Transverse colon (tissue), 4 donors: ENCODE measurements at regions of chr3 and their contacts with region 1.

Region 1: GRCh38 chr3:45760878-45761711 is 35.2 kb downstream of the SLC6A20 start:
- DNase-seq: peak; percentile 58
- H3K4me3 ChIP-seq: no peak overlapping the region
- H3K27ac ChIP-seq: no peak overlapping the region
- H3K4me1 ChIP-seq: peaks cover 0 to 3% (median 0%) of the 10 kb centered on the region in 4 donors
- H3K27me3 ChIP-seq: no peaks in the 10 kb centered on the region
- CTCF ChIP-seq: peak; percentile 65 to 82 (median 77)
- EP300 ChIP-seq: no peak
- POLR2A ChIP-seq: no peak

Region 2: GRCh38 chr3:45666757-45667431 is 94.2 kb before region 1 on chr3:
- in situ Hi-C with region 1: no loop called
- intact Hi-C with region 1: no loop called
- DNase-seq: no peak
- H3K4me3 ChIP-seq: no peak overlapping the region
- H3K27ac ChIP-seq: peak overlapping the region; percentile 19 to 52 (median 40)
- H3K4me1 ChIP-seq: peaks cover 7 to 25% (median 14%) of the 10 kb centered on the region in 4 donors
- H3K27me3 ChIP-seq: no peaks in the 10 kb centered on the region
- CTCF ChIP-seq: no peak
- EP300 ChIP-seq: no peak
- POLR2A ChIP-seq: no peak

Region 3: GRCh38 chr3:45929042-45929679 is 168.1 kb after region 1 on chr3:
- in situ Hi-C with region 1: loop called in 3 of 4 experiments (anchors 5 to 10 kb)
- intact Hi-C with region 1: loop called (anchors 10 kb)
- DNase-seq: peak; percentile 47
- H3K4me3 ChIP-seq: no peak overlapping the region
- H3K27ac ChIP-seq: no peak overlapping the region
- H3K4me1 ChIP-seq: no peaks in the 10 kb centered on the region
- H3K27me3 ChIP-seq: no peaks in the 10 kb centered on the region
- CTCF ChIP-seq: peak; percentile 45 to 62 (median 58)
- EP300 ChIP-seq: no peak
- POLR2A ChIP-seq: no peak

Region 4: DNA sequence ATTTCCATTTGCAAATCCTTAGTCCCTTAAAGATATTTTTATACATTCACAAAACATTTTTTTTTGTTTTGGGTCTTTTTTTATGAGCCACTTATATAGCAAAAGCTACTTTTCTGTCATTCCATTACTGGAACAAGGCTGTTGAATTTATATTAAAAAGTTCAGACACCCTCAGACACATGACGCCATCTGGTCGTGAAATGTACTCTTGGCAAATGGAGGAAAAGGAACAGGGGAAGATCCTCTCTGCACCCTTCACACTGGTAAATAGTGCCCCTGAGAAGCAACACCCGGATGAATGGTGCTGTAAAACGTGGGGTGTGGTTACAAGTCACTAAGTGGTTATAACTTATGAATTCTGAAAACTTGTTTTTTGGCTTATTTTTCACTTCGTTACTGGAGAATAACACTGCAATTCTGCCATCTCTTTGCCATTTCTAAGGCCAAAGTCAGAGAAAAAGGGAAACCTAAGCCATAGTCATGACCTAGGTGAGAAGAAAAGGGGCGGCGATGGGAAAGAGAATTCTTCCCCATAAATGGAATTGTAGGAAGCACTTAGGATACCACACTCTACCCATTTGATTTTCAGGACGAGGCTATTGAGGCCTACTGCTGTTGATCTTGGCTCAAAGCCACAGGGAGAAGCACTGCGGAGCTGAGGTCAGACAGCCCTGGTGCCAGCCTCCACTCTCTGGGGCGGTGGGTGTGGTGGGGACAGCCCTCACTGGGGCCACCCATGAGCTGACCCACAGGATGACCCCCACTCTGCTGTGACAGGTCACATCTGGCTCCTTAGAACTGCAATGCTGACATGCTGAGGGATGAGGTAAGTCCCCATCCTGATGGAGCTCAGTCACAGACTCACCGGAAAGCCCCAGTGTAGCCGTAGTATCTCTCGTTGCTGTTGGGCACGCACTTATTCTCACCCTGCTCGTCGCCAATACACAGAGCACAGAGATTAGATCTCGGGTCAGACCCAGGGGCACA is 681.8 kb after region 1 on chr3:
- in situ Hi-C with region 1: loop called in 1 of 4 experiments (anchors 25 kb)
- intact Hi-C with region 1: no loop called
- DNase-seq: peak; percentile 72
- H3K4me3 ChIP-seq: no peak overlapping the region
- H3K27ac ChIP-seq: no peak overlapping the region
- H3K4me1 ChIP-seq: peaks cover 0 to 6% (median 2%) of the 10 kb centered on the region in 4 donors
- H3K27me3 ChIP-seq: no peaks in the 10 kb centered on the region
- CTCF ChIP-seq: peak in 3 of 5 experiments; percentile 71 to 83 (median 76)
- EP300 ChIP-seq: no peak
- POLR2A ChIP-seq: no peak